ENCODE measurements at regions of chr7 and their contacts with region 1.

Region 1: DNA sequence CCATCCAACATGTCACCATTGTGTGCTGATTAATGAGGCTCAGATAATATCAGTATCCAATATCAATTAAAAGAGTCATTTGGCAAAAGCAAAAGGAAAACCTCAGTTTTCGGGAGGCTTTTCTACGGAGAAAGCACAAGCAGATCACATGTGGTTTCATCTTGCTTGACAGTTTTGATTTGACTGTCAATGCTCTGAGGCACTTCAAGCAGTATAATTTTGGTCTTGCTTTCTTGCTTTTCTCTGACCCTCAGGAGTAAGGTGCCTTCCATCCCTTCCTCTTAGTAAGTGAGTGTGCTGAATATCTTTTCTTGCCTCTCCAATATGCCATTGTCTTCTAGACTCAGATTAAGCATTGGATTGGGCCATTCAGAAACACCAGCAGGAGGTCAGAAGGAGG is 115.5 kb upstream of the CALCR start:
- DNase-seq: no peak

Region 2: DNA sequence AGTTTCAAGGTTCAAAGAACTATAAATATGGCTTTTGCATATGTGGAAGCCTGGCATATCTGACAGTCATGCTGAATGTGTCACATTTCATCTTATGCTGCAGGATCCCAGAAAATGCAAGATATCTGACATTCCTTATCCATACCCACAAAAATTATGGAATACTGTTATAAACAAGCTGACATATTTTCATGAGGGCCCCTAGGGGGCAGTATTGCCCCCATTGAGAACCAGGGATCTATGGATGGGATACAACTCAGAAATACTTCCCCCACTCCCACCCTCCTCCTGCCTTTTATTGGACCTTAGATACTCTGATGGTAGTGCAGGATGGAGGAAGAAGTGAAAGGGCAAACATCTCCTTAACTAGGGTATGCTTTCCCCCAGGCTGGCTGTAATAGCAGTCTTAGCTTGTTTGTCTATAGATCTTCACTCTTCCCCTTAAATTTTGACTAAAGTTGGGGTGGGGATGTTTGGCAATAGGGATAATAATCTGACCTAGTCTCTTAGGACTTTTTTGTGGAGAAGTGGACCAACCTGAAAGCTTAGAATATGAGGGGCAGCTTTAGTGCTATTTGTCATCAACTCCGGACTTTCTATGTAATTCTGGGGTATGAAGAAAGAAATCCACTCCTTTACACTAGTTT is 212.9 kb after region 1 on chr7:
- intact Hi-C with region 1: no loop called
- DNase-seq: no peak

Region 3: GRCh38 chr7:94160719-94161435 is 470.9 kb after region 1 on chr7:
- intact Hi-C with region 1: loop called in 1 of 2 experiments (anchors 10 kb)
- DNase-seq: no peak

Region 4: DNA sequence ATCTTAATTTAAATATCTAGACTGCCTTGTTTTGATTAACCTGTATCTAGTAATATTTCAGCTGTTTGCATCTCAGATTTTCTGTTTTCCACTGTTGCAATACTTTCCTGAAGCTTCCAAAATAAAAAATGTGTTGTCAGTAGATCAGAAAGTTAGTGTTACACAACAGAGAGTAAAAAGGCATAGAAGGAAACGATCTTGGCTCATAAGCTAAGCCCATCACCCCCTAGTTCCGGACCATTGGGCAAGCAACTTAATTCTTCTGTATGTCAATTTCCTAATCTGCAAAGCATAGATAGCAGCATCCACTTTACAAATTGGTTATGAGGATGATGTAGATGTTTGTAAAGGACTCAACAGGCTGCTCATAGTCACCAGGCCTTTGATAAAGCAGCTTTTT is 1701.7 kb after region 1 on chr7:
- intact Hi-C with region 1: loop called in 1 of 2 experiments (anchors 5 kb)
- DNase-seq: no peak

Measured in posterior vena cava (tissue), 2 donors.